H1 (cell line): ENCODE measurements at regions of chr9 and their contacts with region 1.

Region 1: DNA sequence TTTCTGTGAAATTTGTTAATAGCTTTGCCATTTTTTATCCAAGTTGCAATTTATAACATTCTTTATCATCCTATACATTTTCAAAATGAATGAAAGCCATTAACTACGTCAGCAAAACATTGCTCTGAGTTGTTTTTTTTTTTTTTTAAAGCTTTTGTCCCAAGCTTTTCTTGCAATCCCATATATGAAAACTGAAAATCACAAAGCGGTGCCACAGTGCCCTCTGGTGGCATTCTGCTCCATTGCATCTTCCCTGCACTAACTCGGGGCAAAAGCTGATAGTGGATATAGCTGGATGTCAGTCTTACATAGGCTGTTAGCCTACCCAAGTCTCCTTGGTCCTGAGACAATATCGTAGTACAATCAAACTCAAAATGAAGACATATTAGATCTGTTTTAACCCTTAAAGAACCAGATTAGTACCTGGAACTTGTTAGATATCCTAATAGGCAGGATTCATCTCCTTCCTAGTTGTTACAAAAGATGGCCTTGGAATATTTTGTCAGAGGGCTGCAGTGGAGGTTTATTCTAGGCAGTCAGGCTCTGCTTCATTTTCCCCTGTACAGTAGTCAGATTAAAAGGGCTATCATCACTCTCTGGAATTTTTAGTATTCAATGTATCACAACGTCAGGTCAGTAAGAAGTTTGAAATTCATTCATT is 669.9 kb downstream of the PTPRD start:
- DNase-seq: peak; percentile 70 to 89
- H3K4me3 ChIP-seq: no peak overlapping the region
- H3K27ac ChIP-seq: no peak overlapping the region
- H3K4me1 ChIP-seq: no peaks in the 10 kb centered on the region
- H3K27me3 ChIP-seq: no peaks in the 10 kb centered on the region
- CTCF ChIP-seq: peak; percentile 74 to 86 (median 74)
- EP300 ChIP-seq: no peak
- POLR2A ChIP-seq: no peak
- RAD21 ChIP-seq: peak; percentile 89 to 93

Region 2: DNA sequence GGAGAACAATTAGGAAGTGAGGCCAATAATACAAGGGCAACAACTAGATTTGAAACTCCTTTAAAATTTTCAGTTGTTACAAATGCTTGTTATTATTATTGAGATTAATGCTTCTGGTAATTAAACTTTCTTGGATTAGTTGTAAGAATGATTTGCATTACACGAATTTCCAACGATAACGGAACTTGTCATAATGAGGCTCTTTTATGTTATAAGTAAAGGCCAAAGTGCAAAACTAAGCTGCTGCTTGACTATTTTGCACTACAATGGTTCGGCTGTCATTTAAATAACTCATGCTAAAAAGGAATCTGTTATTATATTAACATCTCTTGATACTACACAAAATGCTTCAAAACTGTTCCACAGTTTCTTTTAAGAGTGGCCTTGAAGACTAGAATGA is 337.2 kb before region 1 on chr9:
- CTCF ChIA-PET with region 1: interaction called, 44 read pairs
- POLR2A ChIA-PET with region 1: no interaction called
- DNase-seq: no peak
- H3K4me3 ChIP-seq: no peak overlapping the region
- H3K27ac ChIP-seq: no peak overlapping the region
- H3K4me1 ChIP-seq: peaks cover 0 to 4% (median 1%) of the 10 kb centered on the region in 4 experiments; a peak in 3 of 7 replicates
- H3K27me3 ChIP-seq: no peaks in the 10 kb centered on the region
- CTCF ChIP-seq: no peak
- EP300 ChIP-seq: no peak
- POLR2A ChIP-seq: no peak
- RAD21 ChIP-seq: no peak

Region 3: DNA sequence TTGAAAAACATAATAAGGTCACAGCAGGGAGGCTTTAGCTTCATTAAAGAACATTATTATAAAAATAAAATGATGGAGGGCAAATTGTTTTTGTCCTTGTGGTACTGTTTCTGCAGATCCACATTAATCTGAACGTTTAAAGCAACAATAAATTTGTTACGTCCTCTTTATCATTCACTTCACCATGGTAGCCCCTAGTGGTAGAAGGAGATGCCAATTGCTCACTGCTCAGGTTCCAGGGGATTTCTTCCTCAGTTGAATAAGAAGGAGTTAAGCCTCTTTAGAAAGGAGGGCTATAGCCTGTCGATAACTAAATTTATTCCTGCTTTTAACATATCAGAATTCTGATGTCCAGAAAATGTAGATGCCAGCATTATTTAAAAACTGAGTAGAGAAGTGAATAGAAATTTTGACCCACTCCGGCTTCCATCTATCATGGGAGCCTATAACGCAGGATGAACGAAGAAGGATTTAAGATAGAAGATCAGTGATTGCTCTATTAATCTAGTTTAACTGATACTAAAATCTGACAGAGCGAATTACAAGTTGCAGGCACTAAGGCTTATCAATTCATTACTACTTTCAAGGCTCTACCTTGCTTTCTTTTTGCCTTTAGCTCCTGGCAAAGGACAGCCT is 22.4 kb before region 1 on chr9:
- CTCF ChIA-PET with region 1: interaction called, 29 read pairs
- POLR2A ChIA-PET with region 1: no interaction called
- DNase-seq: no peak
- H3K4me3 ChIP-seq: no peak overlapping the region
- H3K27ac ChIP-seq: no peak overlapping the region
- H3K4me1 ChIP-seq: no peaks in the 10 kb centered on the region
- H3K27me3 ChIP-seq: no peaks in the 10 kb centered on the region
- CTCF ChIP-seq: peak in 2 of 3 experiments; percentile 32 to 58; a peak in 3 of 4 replicates
- EP300 ChIP-seq: no peak
- POLR2A ChIP-seq: no peak
- RAD21 ChIP-seq: peak; percentile 32 to 46; a peak in 3 of 4 replicates